Mammary epithelial cell (primary cell): ENCODE measurements at regions of chr11 and their contacts with region 1.

Region 1: GRCh38 chr11:36149538-36150242 is 139.5 kb downstream of the COMMD9 start:
- DNase-seq: peak; percentile 100
- H3K4me3 ChIP-seq: no peak overlapping the region
- H3K27ac ChIP-seq: peak overlapping the region; percentile 67
- H3K4me1 ChIP-seq: peaks cover 43% of the 10 kb centered on the region
- H3K27me3 ChIP-seq: no peaks in the 10 kb centered on the region
- CTCF ChIP-seq: peak; percentile 63 to 76

Region 2: GRCh38 chr11:35714882-35715627 is 434.6 kb before region 1 on chr11:
- CTCF ChIA-PET with region 1: no interaction called
- dilution Hi-C with region 1: no loop called
- in situ Hi-C with region 1: no loop called
- intact Hi-C with region 1: loop called (anchors 10 kb)
- DNase-seq: peak; percentile 32
- H3K4me3 ChIP-seq: no peak overlapping the region
- H3K27ac ChIP-seq: no peak overlapping the region
- H3K4me1 ChIP-seq: no peaks in the 10 kb centered on the region
- H3K27me3 ChIP-seq: no peaks in the 10 kb centered on the region
- CTCF ChIP-seq: no peak

Region 3: GRCh38 chr11:35969089-35970042 is 180.3 kb before region 1 on chr11:
- CTCF ChIA-PET with region 1: no interaction called
- dilution Hi-C with region 1: no loop called
- in situ Hi-C with region 1: no loop called
- intact Hi-C with region 1: no loop called
- DNase-seq: no peak
- H3K4me3 ChIP-seq: no peak overlapping the region
- H3K27ac ChIP-seq: no peak overlapping the region
- H3K4me1 ChIP-seq: no peaks in the 10 kb centered on the region
- H3K27me3 ChIP-seq: no peaks in the 10 kb centered on the region
- CTCF ChIP-seq: no peak

Region 4: DNA sequence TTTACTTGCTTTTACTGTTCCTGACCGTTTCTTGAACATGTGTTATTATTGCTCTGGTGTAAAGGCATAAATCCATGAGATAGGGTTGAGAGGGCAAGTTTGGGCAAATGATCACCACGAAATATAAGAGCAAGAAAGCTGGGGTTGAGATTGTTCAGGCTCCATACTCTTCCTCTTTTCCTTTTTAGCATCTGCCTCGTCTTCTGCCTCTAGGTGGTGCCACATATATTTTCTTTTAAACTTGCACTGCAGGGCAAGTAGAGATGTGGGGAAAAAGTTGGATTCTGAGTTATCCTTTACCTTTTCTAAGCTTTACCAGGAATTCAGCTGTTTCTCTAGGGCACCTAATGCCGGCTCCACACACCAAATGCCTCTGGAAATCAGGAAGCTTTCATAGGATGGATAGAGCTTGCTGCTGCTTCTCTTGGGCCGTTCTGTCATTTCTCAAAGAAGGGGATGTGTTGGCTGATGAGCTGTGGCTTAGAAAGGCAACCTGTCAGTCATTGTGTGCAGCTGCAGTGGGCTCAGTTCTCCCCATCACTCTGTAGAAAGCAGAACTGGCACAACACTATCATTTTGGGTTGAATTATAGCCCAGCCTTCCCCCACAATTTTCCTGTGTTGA is 107.6 kb before region 1 on chr11:
- CTCF ChIA-PET with region 1: no interaction called
- dilution Hi-C with region 1: no loop called
- in situ Hi-C with region 1: no loop called
- intact Hi-C with region 1: loop called (anchors 1 kb)
- DNase-seq: no peak
- H3K4me3 ChIP-seq: no peak overlapping the region
- H3K27ac ChIP-seq: no peak overlapping the region
- H3K4me1 ChIP-seq: peaks cover under 1% of the 10 kb centered on the region
- H3K27me3 ChIP-seq: no peaks in the 10 kb centered on the region
- CTCF ChIP-seq: peak; percentile 37 to 52

Region 5: DNA sequence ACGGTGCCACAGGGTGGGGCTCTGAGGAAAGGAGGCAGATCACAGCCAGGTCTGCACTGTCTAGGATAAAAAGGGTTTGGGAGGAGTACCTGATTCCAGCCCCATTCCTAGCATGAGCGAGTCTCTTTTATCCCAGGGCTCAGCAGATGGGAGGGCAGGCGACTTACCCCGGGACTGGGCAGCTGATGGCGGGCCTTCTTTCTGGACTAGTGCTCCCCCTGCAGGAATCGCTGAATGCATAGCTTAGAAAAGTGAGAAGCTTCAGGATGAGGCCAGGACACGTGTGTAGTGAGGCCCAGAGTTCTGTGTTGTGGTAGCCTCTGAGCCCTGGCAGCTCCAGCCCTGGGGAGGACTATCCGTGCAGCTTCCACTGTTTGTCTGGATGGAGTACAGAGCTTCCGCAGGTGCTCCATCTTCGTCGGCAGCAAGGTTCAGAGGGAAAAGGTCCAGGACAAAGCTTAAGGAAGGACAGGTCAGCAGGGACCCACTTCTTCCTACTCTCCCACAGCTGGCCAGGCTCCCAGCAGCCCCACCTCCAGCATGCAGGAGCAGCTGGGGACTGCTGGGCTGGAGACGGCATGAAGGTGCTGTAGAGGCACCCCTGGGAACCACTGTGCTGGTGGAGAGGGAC is 109.2 kb after region 1 on chr11:
- CTCF ChIA-PET with region 1: no interaction called
- dilution Hi-C with region 1: no loop called
- in situ Hi-C with region 1: no loop called
- intact Hi-C with region 1: loop called (anchors 2 kb)
- DNase-seq: peak; percentile 35
- H3K4me3 ChIP-seq: no peak overlapping the region
- H3K27ac ChIP-seq: no peak overlapping the region
- H3K4me1 ChIP-seq: peaks cover 9% of the 10 kb centered on the region
- H3K27me3 ChIP-seq: no peaks in the 10 kb centered on the region
- CTCF ChIP-seq: peak; percentile 36 to 47

Region 6: DNA sequence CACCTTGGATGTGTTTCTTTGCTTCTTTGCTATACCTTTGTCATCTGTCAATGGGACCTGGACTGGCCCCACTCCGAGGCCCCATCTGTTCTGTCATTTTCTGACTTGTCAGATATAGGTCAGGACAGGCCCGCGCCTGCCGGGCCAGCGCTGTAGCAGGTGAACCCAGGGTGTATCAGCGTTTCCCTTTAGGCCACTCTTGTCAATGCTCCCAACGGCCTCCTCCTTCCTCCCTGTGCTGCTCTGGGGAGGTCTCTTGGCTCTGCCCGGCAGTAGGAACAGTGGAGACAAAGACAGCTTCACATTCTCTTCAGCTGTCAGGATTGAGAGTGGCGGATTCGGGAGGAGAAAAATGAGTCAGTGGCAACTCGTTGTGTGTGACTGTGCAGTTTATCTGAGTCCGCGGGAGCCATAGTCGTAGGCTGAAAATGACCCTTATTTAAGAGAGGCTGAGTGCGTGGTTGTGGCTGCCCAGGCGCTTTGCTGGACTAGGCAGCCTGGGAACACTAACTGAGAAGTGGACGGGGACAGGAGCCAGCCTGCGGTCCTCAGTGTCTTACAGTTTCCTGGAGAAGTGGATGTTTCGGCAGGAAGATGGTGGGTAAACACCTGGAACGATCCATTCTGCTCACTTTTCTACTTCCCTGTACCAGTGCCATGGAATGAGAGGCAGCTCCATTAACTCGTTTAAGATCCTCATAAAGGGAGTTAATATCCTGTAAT is 248.7 kb after region 1 on chr11:
- CTCF ChIA-PET with region 1: no interaction called
- dilution Hi-C with region 1: no loop called
- in situ Hi-C with region 1: no loop called
- intact Hi-C with region 1: no loop called
- DNase-seq: peak; percentile 25
- H3K4me3 ChIP-seq: no peak overlapping the region
- H3K27ac ChIP-seq: no peak overlapping the region
- H3K4me1 ChIP-seq: peaks cover 12% of the 10 kb centered on the region
- H3K27me3 ChIP-seq: no peaks in the 10 kb centered on the region
- CTCF ChIP-seq: no peak